Colonic mucosa (tissue), 4 donors: ENCODE measurements at regions of chr18 and their contacts with region 1.

Region 1: GRCh38 chr18:62982600-62983251 is 267.4 kb downstream of the PHLPP1 start:
- DNase-seq: peak; percentile 64
- H3K4me3 ChIP-seq: no peak overlapping the region
- H3K27ac ChIP-seq: no peak overlapping the region
- H3K4me1 ChIP-seq: no peaks in the 10 kb centered on the region
- H3K27me3 ChIP-seq: no peaks in the 10 kb centered on the region
- CTCF ChIP-seq: peak; percentile 51

Region 2: DNA sequence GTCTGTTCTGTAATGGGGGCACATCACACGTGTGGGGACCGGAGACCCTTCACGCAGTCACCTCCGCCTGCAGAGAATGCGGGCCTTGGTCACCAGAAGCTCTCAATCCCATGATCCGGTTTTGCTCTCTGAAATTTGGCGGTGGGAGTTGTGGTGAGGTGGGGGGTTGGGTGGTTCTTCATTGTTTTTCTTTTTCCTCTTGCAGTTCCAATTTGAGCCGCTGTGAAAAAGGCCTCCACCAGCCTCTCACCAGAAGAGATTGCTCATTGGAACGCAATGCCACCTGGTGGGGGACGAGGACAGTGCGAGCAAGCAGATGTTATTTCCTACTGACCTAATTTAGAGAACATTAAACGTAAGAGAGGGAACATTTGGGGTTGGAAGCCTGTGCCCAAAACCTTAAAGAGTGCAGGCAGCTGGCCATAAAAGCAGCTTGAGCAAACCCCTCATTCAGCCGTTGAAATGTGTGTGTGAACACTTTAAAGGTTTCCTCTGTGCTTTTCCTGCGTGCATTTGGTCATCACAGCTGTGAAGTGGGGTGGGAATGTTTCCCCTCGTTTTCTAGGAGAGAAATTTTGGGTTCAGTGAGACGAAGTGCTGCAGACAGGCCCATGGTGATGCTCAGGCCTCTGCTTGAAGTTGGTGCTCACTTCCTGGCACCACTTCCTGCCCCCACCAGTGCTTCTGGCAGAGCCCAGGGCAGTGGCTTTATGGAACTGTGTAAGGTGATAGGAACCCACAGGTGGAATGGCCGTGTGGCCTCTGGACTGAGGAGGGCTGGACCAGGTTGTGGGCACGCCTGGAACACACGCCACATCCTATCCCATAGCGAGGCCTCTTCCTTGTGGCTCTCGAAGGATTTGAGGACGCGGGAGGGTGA is 398.2 kb before region 1 on chr18:
- intact Hi-C with region 1: loop called (anchors 5 kb)
- DNase-seq: peak; percentile 89
- H3K4me3 ChIP-seq: no peak overlapping the region
- H3K27ac ChIP-seq: no peak overlapping the region
- H3K4me1 ChIP-seq: no peaks in the 10 kb centered on the region
- H3K27me3 ChIP-seq: no peaks in the 10 kb centered on the region
- CTCF ChIP-seq: peak; percentile 96

Region 3: DNA sequence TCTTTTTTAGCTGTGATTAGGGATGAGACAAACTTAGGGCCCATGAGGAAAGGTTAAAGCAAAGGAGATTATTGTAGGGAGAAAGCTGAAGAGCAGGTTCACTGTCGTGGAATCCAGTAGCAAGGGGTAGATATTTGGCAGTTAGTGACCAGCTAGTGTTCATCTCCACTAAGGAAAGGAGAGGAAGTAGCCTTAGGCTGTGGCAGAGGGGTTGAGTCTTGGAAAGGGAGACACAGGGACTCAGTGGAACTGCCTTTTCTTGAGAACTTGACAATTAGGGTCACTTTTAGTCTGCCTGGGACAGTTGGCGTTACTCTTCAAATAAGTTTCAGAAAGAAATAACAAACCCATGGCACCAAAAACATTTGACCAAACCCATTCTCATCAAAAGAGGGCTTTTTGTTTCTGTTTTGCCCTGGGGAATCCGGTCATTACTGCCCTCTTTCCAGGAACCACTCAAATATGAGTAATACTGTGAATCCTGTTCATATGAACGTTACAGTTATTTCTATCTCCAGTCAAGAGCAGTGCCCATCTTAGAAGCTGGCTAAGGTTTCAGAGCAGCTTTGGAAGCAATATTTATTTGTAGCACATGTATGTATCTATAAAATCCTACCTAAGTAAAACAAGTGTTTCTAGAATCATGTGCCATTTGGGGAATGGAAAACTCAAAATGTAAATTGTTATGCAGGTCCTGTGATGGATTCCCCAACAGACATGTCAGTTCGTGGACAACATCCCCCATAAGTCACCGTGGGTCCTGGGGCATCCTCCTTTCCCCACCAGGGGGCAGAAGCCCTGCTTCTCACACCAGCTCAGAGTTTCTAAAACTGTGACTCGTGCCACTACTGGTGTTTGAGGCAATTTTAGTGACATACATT is 344.7 kb before region 1 on chr18:
- intact Hi-C with region 1: loop called (anchors 5 kb)
- DNase-seq: peak; percentile 36
- H3K4me3 ChIP-seq: no peak overlapping the region
- H3K27ac ChIP-seq: no peak overlapping the region
- H3K4me1 ChIP-seq: no peaks in the 10 kb centered on the region
- H3K27me3 ChIP-seq: no peaks in the 10 kb centered on the region
- CTCF ChIP-seq: peak; percentile 70

Region 4: GRCh38 chr18:62714671-62715435 is 267.9 kb before region 1 on chr18:
- intact Hi-C with region 1: loop called (anchors 5 kb)
- DNase-seq: peak; percentile 100
- H3K4me3 ChIP-seq: peak overlapping the region; percentile 52
- H3K27ac ChIP-seq: peak overlapping the region; percentile 88
- H3K4me1 ChIP-seq: no peaks in the 10 kb centered on the region
- H3K27me3 ChIP-seq: no peaks in the 10 kb centered on the region
- CTCF ChIP-seq: peak; percentile 61

Region 5: GRCh38 chr18:62790871-62791772 is 191.6 kb before region 1 on chr18:
- intact Hi-C with region 1: no loop called
- DNase-seq: no peak
- H3K4me3 ChIP-seq: no peak overlapping the region
- H3K27ac ChIP-seq: no peak overlapping the region
- H3K4me1 ChIP-seq: no peaks in the 10 kb centered on the region
- H3K27me3 ChIP-seq: no peaks in the 10 kb centered on the region
- CTCF ChIP-seq: no peak

Region 6: DNA sequence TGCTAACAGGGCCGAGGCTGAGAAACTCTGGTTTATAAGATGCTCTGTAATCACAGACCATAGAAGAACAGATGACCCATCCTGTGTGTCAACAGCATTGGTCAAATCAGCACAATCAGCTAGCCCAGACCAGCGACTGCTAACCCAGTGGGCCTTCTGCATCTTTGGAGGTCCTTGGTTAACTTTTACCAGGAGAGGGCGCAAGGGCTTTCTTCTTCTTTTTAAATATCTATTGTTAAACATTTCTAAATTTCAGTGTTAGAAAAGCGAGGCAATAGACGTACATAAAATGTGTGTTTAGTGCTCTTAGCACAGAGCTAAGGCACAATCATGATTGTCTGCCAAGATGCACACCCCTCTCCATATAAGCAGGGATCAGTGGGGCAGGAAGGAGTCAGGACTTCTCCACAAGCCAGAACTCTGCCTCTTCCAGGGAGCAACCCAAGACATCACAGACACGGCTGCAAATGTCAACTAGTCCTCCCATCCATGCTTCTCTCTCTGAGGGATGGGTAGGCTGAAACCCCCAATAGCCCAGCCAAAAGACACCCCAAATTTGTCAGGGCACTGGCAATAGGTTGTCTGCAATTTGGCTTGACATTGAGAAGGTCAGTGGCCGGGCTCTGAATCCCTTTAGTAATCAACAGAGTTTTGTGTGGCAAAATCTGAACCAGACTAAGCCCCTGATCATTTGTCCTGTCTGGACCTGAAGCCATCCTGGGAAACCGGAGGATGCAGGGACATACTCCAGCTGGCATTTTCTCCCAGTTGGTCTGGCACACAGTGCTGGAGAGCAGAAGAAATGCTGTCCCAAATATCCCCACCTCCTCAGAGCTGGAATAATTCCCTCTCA is 148.6 kb after region 1 on chr18:
- intact Hi-C with region 1: no loop called
- DNase-seq: peak; percentile 81
- H3K4me3 ChIP-seq: no peak overlapping the region
- H3K27ac ChIP-seq: peak overlapping the region; percentile 49
- H3K4me1 ChIP-seq: peaks cover 13% of the 10 kb centered on the region
- H3K27me3 ChIP-seq: no peaks in the 10 kb centered on the region
- CTCF ChIP-seq: peak; percentile 66

Region 7: GRCh38 chr18:63177919-63178821 is 195.4 kb after region 1 on chr18:
- intact Hi-C with region 1: no loop called
- DNase-seq: peak; percentile 83
- H3K4me3 ChIP-seq: no peak overlapping the region
- H3K27ac ChIP-seq: peak overlapping the region; percentile 86
- H3K4me1 ChIP-seq: peaks cover 20% of the 10 kb centered on the region
- H3K27me3 ChIP-seq: no peaks in the 10 kb centered on the region
- CTCF ChIP-seq: no peak